PC-3 (cell line): ENCODE measurements at regions of chr10 and their contacts with region 1.

Region 1: DNA sequence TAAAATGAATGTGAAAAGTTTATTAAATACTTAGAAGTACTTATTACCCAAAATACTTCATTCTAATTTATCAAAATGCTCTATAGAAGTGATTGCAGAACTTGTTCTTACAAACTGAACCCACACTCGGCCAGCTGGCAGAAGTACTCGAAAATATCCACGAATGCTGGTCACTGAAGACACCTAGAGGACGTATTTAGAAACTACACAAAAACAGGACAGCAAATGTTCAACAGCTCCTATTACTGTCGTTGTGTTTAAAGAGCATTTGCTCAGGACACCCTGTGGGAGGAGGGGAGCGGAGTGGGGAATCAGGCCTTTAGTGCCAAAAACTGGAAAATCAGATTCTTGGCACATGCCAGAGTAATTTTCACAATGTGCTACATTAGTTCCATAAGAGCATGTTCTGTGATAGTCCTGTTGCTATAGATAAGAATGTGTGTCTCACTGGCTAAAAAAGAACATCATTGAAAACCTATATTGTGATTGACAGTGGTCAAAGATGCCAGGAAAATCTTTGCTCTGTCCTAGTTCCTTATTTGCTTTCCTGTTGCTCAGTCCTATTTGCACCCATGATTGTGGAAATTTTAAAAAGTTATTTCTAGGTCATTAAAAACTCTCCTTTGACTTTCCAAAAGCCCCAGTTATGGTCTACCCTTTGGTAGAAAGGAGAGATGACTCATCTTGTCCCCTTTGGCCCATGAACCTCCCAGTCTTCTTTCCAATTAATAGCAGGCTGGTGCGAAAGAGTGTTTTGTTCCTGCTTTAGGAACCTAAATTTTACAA is 49.0 kb upstream of the NRBF2 start:
- DNase-seq: peak; percentile 99
- ATAC-seq: peak; percentile 95
- H3K4me3 ChIP-seq: no peak overlapping the region
- H3K27ac ChIP-seq: no peak overlapping the region
- H3K4me1 ChIP-seq: peaks cover 14% of the 10 kb centered on the region
- H3K27me3 ChIP-seq: no peaks in the 10 kb centered on the region
- CTCF ChIP-seq: peak; percentile 100

Region 2: DNA sequence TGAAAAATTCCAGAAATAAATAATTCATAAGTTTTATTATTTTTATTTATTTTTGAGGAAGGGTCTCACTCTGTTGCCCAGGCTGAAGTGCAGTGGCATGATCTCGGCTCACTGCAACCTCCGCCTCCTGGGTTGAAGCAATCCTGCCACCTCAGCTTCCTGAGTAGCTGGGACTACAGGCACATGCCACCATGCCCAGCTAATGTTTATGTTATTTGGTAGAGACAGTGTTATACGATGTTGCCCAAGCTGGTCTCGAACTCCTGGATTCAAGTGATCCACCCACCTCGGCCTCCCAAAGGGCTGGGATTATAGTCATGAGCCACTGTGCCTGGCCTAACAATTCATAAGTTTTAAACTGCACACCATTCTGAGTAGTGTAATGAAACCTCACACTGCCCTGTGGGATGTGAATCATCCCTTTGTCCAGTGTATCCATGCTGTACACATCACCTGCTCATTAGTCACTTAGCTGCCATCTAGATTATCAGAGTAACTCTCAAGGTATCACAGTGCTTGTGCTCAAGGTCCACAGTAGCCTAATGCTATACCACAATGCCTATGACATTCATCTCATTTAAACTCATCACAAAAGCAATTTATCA is 833.4 kb before region 1 on chr10:
- CTCF ChIA-PET with region 1: no interaction called
- POLR2A ChIA-PET with region 1: no interaction called
- intact Hi-C with region 1: loop called (anchors 5 kb)
- DNase-seq: peak; percentile 100
- ATAC-seq: peak; percentile 98
- H3K4me3 ChIP-seq: no peak overlapping the region
- H3K27ac ChIP-seq: peak overlapping the region; percentile 44
- H3K4me1 ChIP-seq: peaks cover 47% of the 10 kb centered on the region
- H3K27me3 ChIP-seq: no peaks in the 10 kb centered on the region
- CTCF ChIP-seq: no peak

Region 3: DNA sequence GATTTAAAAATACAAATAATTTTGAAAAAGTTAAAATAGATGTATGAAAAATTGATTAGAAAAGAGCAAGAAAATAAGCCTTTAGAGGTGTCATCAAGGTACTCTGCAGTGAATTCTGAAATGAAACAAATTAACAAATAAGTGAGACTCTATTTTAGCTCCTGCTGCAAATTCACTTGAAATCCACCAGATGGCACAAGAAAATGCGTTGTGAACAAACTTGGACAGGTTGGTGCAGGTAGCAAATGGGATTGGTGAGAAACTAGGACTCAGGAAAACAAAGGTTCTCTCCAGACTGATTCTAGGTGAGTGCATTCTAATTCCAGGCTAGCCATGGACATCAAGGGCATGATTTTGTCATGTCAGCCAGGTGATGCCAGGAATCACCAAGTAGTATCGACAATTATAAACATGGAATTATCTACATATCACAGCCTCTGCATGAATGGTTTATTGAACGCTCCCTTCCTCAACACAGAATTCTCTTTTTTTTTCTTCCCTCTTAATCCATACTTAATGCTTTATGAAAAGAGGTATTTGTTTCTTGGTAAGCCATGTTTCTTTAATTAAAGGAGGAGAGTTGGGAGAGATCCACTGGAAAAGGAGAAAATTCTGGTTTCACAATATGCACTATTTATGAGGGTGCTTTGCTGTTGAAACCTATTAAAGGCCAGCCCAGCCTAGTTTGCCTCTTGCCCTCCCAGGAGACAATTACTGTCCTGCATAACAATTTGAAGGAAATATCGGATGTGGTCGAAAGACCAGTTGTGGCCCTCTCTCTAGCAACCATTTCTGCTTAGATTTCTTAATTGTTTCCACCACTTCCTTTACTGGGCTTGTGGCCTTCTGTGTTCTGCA is 591.9 kb before region 1 on chr10:
- CTCF ChIA-PET with region 1: interaction called, 6 read pairs
- POLR2A ChIA-PET with region 1: no interaction called
- intact Hi-C with region 1: loop called (anchors 1 kb)
- DNase-seq: peak; percentile 92
- ATAC-seq: peak; percentile 90
- H3K4me3 ChIP-seq: no peak overlapping the region
- H3K27ac ChIP-seq: no peak overlapping the region
- H3K4me1 ChIP-seq: no peaks in the 10 kb centered on the region
- H3K27me3 ChIP-seq: peaks cover 7% of the 10 kb centered on the region; the same call in 1 of the 2 replicates
- CTCF ChIP-seq: peak; percentile 100

Region 4: DNA sequence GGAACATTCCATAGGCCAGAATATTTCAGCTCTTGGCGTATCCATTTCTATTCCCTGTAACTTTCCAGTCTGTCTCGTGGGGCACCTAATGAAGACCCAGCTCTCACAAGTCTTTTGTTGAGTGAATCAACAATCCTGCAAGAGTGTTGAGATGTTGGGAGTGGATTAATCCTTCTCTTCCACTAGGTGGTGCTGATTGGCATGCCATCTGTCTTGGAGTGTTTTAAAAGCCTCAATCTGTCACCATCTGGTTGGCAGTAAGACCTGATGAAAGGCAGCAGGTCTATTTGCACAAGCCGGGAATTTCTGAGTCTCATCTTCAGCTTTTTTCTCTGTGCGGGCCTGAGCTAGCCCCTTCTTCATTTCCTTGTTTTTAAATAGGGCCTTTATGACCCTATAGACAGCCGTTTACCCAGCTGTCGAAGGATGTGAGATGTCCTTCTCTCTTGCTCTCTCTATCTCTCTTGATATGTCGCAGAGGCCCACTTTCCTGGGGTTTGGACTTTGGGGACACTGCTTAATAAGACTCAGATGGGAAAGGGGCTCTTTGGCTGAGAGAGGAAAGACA is 529.4 kb before region 1 on chr10:
- CTCF ChIA-PET with region 1: no interaction called
- POLR2A ChIA-PET with region 1: no interaction called
- intact Hi-C with region 1: loop called (anchors 1 kb)
- DNase-seq: peak; percentile 94
- ATAC-seq: peak; percentile 94
- H3K4me3 ChIP-seq: no peak overlapping the region
- H3K27ac ChIP-seq: no peak overlapping the region
- H3K4me1 ChIP-seq: no peaks in the 10 kb centered on the region
- H3K27me3 ChIP-seq: no peaks in the 10 kb centered on the region
- CTCF ChIP-seq: peak; percentile 99

Region 5: DNA sequence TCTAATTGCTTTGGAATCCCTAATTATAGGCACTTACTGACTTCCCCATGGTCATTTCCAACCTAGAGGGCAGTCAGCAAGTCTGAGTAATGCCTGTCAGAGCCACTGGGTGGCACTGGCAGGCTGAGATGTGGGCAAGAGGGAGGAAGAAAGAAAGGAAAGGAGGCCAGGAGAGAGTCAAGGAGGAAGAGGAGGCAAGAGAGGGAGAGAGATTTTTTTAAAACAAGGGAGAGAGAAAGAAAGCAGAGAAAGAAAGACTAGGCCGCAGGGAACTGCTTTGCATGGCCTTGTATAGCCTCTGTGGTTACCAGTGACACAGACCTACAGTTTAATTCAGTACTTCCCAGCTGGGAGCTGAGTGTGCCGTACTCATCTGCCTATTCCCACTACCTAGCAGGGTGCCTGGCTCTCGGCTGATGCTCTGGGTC is 490.0 kb before region 1 on chr10:
- CTCF ChIA-PET with region 1: interaction called, 4 read pairs
- POLR2A ChIA-PET with region 1: no interaction called
- intact Hi-C with region 1: loop called (anchors 1 kb)
- DNase-seq: peak; percentile 98
- ATAC-seq: peak; percentile 86
- H3K4me3 ChIP-seq: no peak overlapping the region
- H3K27ac ChIP-seq: no peak overlapping the region
- H3K4me1 ChIP-seq: peaks cover 11% of the 10 kb centered on the region
- H3K27me3 ChIP-seq: no peaks in the 10 kb centered on the region
- CTCF ChIP-seq: peak; percentile 100

Region 6: GRCh38 chr10:62610649-62611229 is 473.4 kb before region 1 on chr10:
- CTCF ChIA-PET with region 1: interaction called, 9 read pairs
- POLR2A ChIA-PET with region 1: no interaction called
- intact Hi-C with region 1: loop called (anchors 1 kb)
- DNase-seq: peak; percentile 99
- ATAC-seq: peak; percentile 72
- H3K4me3 ChIP-seq: no peak overlapping the region
- H3K27ac ChIP-seq: no peak overlapping the region
- H3K4me1 ChIP-seq: peaks cover 29% of the 10 kb centered on the region
- H3K27me3 ChIP-seq: no peaks in the 10 kb centered on the region
- CTCF ChIP-seq: peak; percentile 100

Region 7: DNA sequence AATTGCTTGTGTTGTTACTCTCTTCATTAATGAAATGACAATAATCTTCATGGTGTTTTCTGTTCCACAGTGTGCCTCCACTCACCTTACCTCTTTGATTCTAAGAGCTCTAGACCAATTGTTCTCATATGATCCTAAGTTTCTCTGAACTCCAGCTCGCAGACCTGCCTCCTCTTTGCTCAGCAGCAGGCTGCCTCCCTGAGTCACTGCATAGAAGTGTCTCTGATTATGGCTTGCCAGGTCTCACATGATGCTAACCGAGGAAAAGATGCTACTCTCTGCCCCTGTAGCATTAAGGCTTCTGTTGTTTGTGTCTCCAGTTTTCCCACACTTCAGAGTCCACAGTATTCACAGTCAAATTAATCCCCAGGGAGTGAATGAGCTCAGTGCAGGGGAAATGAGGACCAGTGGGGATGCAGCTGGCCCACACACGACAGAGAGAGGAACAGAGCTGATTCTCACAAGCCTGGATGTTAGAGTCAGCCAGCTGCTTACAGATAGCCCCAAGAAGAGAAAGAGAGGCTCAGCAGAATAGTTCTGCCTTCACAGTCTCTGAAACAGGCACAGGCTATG is 122.1 kb before region 1 on chr10:
- CTCF ChIA-PET with region 1: interaction called, 7 read pairs
- POLR2A ChIA-PET with region 1: no interaction called
- intact Hi-C with region 1: loop called (anchors 1 kb)
- DNase-seq: peak; percentile 38
- ATAC-seq: no peak
- H3K4me3 ChIP-seq: no peak overlapping the region
- H3K27ac ChIP-seq: no peak overlapping the region
- H3K4me1 ChIP-seq: peaks cover 37% of the 10 kb centered on the region
- H3K27me3 ChIP-seq: no peaks in the 10 kb centered on the region
- CTCF ChIP-seq: no peak

Region 8: GRCh38 chr10:63145782-63146181 is 61.7 kb after region 1 on chr10:
- CTCF ChIA-PET with region 1: no interaction called
- POLR2A ChIA-PET with region 1: no interaction called
- intact Hi-C with region 1: no loop called
- DNase-seq: no peak
- ATAC-seq: peak; percentile 29; the same call in 1 of the 2 replicates
- H3K4me3 ChIP-seq: no peak overlapping the region
- H3K27ac ChIP-seq: no peak overlapping the region
- H3K4me1 ChIP-seq: no peaks in the 10 kb centered on the region
- H3K27me3 ChIP-seq: no peaks in the 10 kb centered on the region
- CTCF ChIP-seq: no peak